GM18951 (cell line): ENCODE measurements at regions of chr15 and their contacts with region 1.

Region 1: DNA sequence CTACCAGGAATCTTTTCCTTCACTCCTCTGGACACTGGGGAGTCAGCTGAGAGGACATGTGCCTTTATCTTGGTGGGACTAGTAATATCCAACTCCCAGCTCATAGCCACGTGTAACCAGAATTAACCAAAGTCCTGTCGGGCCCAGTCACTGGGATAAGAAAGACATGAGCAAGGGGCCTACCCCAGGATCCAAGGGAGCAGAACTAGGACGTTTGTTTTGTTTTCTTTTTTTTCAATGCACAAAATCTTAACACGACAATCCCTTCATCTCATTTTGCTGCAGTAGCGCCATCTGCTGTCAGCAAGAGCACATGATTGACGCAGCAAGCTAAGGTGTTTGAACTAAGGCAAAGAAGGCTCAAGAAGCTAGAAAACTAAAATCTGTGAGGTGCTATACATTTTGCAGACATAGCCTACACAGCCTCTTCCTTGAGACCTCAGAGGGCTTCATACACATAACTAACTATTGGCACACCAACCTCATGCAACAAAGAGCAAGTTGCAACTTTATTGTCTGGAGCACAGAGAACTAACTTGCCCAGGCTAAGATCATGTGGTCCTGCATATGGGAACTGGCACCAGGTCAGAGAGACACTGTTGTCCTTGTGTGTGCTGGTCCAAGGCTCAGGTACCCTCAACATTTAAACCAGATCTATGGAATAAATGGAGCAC is 43.6 kb downstream of the RLBP1 start:
- POLR2A ChIP-seq: no peak

Region 2: DNA sequence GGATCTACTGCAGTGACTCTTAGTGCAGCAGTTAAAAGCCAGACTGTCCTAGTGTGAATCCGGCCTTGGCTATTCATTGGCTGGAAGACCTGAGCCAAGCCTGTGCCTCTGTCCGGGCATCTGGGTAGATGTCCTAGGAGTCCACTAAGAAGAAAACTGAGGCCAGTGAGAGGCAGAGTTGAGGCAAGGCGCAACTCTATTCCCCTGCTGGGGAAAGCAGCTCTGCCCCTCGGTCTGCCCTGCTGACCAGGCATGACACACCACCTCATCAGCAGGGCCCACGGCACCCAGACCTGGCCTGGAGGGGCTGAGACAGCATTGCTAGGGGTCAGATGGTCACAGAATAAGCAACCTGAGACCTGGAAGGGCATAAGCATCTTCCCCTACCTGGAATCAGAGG is 136.3 kb before region 1 on chr15:
- in situ Hi-C with region 1: no loop called
- POLR2A ChIP-seq: no peak

Region 3: GRCh38 chr15:89068325-89068784 is 109.4 kb before region 1 on chr15:
- in situ Hi-C with region 1: loop called (anchors 10 kb)
- POLR2A ChIP-seq: no peak